ENCODE measurements at regions of chr4 and their contacts with region 1.

Region 1: GRCh38 chr4:69823481-69824186 is 36.3 kb downstream of the SULT1E1 start:
- DNase-seq: peak; percentile 20 to 79 (median 54)
- ATAC-seq: peak; percentile 99
- H3K4me3 Mint-ChIP-seq: no peak overlapping the region
- H3K27ac Mint-ChIP-seq: peak overlapping the region in 7 of 10 donors; percentile 1 to 86 (median 36)
- H3K4me1 Mint-ChIP-seq: peaks cover 2 to 21% (median 15%) of the 10 kb centered on the region in 4 donors
- H3K27me3 Mint-ChIP-seq: no peaks in the 10 kb centered on the region

Region 2: DNA sequence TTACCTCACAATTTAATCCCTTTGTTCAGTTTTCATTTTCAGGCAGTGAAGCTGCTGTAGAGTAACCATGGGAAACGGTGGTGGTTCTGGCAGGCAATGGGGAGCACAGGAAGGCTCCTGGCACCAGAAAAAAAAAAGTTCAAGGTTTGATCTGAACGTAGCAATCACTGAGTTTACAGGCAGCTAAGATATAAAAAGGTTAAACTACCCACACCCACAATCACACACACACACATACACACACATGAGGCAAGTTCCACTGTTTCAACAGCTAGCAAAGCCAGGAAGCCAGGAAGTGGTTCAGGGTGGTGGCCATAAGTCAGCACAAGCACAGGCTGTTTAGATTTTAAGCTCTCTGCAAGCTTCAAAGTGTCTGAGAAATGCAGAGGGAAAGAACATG is 63.2 kb before region 1 on chr4 and contains the start of gene SULT1B1:
- POLR2A ChIA-PET with region 1: interaction called, 10 read pairs
- DNase-seq: peak in 9 of 10 donors; percentile 34 to 90 (median 72)
- ATAC-seq: peak; percentile 93 to 98
- H3K4me3 Mint-ChIP-seq: peak within 1 kb of the TSS; percentile 87 to 95 (median 91)
- H3K27ac Mint-ChIP-seq: peak within 1 kb of the TSS; percentile 90 to 99 (median 94)
- H3K4me1 Mint-ChIP-seq: peaks cover 22 to 68% (median 57%) of the 10 kb centered on the region in 4 donors
- H3K27me3 Mint-ChIP-seq: no peaks in the 10 kb centered on the region
- polyA plus RNA-seq, gene SULT1B1: 13.2 to 18.2 (median 13.3) TPM

Region 3: DNA sequence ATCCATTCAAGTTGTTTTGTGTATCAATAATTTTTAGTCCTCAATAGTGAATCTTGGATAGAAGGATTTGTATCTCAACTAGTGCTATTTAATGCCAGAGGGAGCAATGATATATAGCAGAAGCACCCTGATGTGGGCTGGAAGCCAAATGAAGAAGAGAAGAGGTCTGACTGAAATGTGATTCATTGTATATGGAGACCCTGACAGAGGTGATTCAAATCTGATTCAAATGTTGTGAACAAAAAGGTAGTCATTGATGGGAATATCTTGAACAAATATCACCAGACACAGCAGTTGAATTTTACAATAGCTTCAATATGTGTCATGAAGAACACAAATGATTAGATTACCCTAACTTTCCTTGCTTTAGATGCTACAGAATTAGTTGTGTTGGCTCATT is 35.8 kb before region 1 on chr4:
- POLR2A ChIA-PET with region 1: no interaction called
- DNase-seq: no peak
- ATAC-seq: no peak
- H3K4me3 Mint-ChIP-seq: no peak overlapping the region
- H3K27ac Mint-ChIP-seq: no peak overlapping the region
- H3K4me1 Mint-ChIP-seq: no peaks in the 10 kb centered on the region
- H3K27me3 Mint-ChIP-seq: no peaks in the 10 kb centered on the region

Measured in naive thymus-derived CD8-positive, alpha-beta T cell (primary cell).